Mammary epithelial cell (primary cell): ENCODE measurements at regions of chr7 and their contacts with region 1.

Region 1: DNA sequence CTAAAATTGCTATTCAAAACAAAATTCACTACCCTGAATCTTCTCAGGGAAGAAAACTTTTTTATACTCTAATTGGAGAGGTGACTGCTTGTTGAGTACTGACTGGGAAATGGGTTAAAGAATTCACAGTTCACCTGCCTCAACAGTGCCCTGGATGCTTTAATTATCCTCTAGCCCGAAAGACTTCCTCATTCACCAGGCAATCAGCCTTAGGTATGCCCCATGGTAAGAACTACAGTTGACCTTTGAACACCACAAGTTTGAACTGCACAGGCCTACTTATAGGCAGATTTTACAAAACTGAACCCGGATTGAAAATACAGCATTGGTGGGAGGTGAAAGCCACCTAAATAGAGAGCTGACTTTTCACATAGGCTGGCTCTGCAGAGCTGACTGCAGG is 175.3 kb downstream of the ELAPOR2 start:
- DNase-seq: no peak
- H3K4me3 ChIP-seq: no peak overlapping the region
- H3K27ac ChIP-seq: no peak overlapping the region
- H3K4me1 ChIP-seq: no peaks in the 10 kb centered on the region
- H3K27me3 ChIP-seq: no peaks in the 10 kb centered on the region
- CTCF ChIP-seq: no peak

Region 2: GRCh38 chr7:85882335-85882734 is 1001.8 kb before region 1 on chr7:
- CTCF ChIA-PET with region 1: no interaction called
- dilution Hi-C with region 1: no loop called
- in situ Hi-C with region 1: no loop called
- intact Hi-C with region 1: loop called (anchors 10 kb)
- DNase-seq: no peak
- H3K4me3 ChIP-seq: no peak overlapping the region
- H3K27ac ChIP-seq: no peak overlapping the region
- H3K4me1 ChIP-seq: no peaks in the 10 kb centered on the region
- H3K27me3 ChIP-seq: no peaks in the 10 kb centered on the region
- CTCF ChIP-seq: no peak

Region 3: GRCh38 chr7:87083865-87084519 is 199.8 kb after region 1 on chr7:
- CTCF ChIA-PET with region 1: no interaction called
- dilution Hi-C with region 1: no loop called
- in situ Hi-C with region 1: no loop called
- intact Hi-C with region 1: no loop called
- DNase-seq: no peak
- H3K4me3 ChIP-seq: no peak overlapping the region
- H3K27ac ChIP-seq: no peak overlapping the region
- H3K4me1 ChIP-seq: no peaks in the 10 kb centered on the region
- H3K27me3 ChIP-seq: no peaks in the 10 kb centered on the region
- CTCF ChIP-seq: no peak